HCT116 (cell line): ENCODE measurements at regions of chr6 and their contacts with region 1.

Region 1: GRCh38 chr6:161318456-161318855 is 44.6 kb upstream of the AGPAT4 start:
- DNase-seq: no peak
- ATAC-seq: no peak
- H3K4me3 ChIP-seq: no peak overlapping the region
- H3K27ac ChIP-seq: no peak overlapping the region
- H3K4me1 ChIP-seq: peaks cover 0 to 20% of the 10 kb centered on the region in 2 experiments; a peak in 2 of 4 replicates
- H3K27me3 ChIP-seq: no peaks in the 10 kb centered on the region
- CTCF ChIP-seq: no peak
- POLR2A ChIP-seq: no peak
- RAD21 ChIP-seq: no peak

Region 2: DNA sequence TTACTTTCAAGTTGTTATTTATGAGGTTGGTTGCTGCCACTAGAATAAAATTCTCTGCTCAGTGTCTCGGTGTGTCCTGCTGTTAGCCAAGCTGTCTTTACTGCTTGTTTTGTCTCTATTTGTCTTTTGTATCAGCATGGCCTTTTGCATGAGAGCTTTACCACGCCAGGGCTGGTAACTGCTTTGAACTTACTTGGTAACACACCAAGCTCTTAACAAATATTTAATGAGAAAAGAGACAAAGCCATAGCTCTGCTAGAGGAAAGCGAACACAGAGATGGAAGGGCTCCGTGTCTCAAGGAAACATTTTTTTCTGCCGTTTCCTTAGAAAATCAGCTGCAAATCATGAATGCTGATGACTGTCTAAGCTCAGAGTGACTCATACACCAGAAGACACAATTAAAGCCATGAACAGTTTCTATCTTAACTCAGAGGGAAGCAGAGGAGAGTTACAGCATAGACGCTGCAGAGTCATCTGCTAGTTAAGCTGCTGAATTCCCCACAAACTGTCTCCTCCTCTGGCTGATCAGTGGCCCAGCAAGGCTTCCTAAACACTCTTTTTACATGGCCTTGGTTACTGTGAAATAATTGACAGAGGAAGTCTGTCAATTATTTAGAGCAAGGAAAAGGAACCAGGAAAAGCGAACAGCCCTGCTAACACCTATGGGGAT is 89.4 kb before region 1 on chr6:
- CTCF ChIA-PET with region 1: no interaction called
- POLR2A ChIA-PET with region 1: no interaction called
- RAD21 ChIA-PET with region 1: no interaction called
- intact Hi-C with region 1: loop called (anchors 5 kb)
- DNase-seq: no peak
- ATAC-seq: no peak
- H3K4me3 ChIP-seq: no peak overlapping the region
- H3K27ac ChIP-seq: no peak overlapping the region
- H3K4me1 ChIP-seq: peaks cover 2 to 60% of the 10 kb centered on the region in 2 experiments
- H3K27me3 ChIP-seq: no peaks in the 10 kb centered on the region
- CTCF ChIP-seq: no peak
- POLR2A ChIP-seq: no peak
- RAD21 ChIP-seq: no peak